T-cell (primary cell): ENCODE measurements at regions of chr19 and their contacts with region 1.

Region 1: GRCh38 chr19:11987405-11988281 is 22.8 kb downstream of the ZNF763 start:
- DNase-seq: peak; percentile 78 to 95 (median 90)
- ATAC-seq: peak; percentile 89 to 94 (median 94)
- H3K4me3 ChIP-seq: peak overlapping the region; percentile 91 to 96
- H3K4me3 Mint-ChIP-seq: peak overlapping the region; percentile 93 to 99 (median 97)
- H3K27ac ChIP-seq: peak overlapping the region; percentile 84
- H3K27ac Mint-ChIP-seq: peak overlapping the region; percentile 94 to 97
- H3K4me1 ChIP-seq: peaks cover 6 to 21% of the 10 kb centered on the region in 2 experiments
- H3K4me1 Mint-ChIP-seq: peaks cover 27 to 38% (median 34%) of the 10 kb centered on the region in 3 donors
- H3K27me3 ChIP-seq: no peaks in the 10 kb centered on the region
- H3K27me3 Mint-ChIP-seq: no peaks in the 10 kb centered on the region

Region 2: DNA sequence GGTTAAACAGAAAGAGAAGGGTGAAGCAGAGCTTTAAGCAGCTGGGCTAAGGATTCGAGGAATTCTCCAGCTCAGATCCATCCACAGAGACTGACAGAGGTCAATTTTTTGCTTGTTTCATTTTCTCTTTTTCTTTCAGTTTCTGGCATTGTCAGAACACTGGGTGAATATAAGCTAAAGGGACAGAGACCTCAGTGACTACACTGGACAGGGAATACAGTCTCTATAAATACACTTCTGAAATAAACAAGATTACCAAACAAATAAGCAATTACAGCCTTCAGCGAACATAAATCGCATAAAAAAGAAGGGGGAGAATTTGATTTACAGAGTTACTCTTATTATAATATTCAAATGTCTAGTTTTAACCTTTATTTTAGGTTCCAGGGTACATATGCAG is 224.5 kb before region 1 on chr19:
- CTCF ChIA-PET with region 1: no interaction called
- POLR2A ChIA-PET with region 1: no interaction called
- DNase-seq: no peak
- ATAC-seq: no peak
- H3K4me3 ChIP-seq: no peak overlapping the region
- H3K4me3 Mint-ChIP-seq: no peak overlapping the region
- H3K27ac ChIP-seq: no peak overlapping the region
- H3K27ac Mint-ChIP-seq: no peak overlapping the region
- H3K4me1 ChIP-seq: peaks cover 2 to 15% of the 10 kb centered on the region in 2 experiments
- H3K4me1 Mint-ChIP-seq: peaks cover 11 to 15% (median 12%) of the 10 kb centered on the region in 3 donors
- H3K27me3 ChIP-seq: no peaks in the 10 kb centered on the region
- H3K27me3 Mint-ChIP-seq: peaks cover 6 to 16% of the 10 kb centered on the region in 2 donors

Region 3: GRCh38 chr19:11856596-11857250 is 130.9 kb before region 1 on chr19:
- CTCF ChIA-PET with region 1: no interaction called
- POLR2A ChIA-PET with region 1: no interaction called
- DNase-seq: no peak
- ATAC-seq: no peak
- H3K4me3 ChIP-seq: no peak overlapping the region
- H3K4me3 Mint-ChIP-seq: no peak overlapping the region
- H3K27ac ChIP-seq: no peak overlapping the region
- H3K27ac Mint-ChIP-seq: no peak overlapping the region
- H3K4me1 ChIP-seq: no peaks in the 10 kb centered on the region
- H3K4me1 Mint-ChIP-seq: peaks cover 0 to 12% (median 5%) of the 10 kb centered on the region in 3 donors
- H3K27me3 ChIP-seq: no peaks in the 10 kb centered on the region
- H3K27me3 Mint-ChIP-seq: no peaks in the 10 kb centered on the region

Region 4: GRCh38 chr19:11942843-11943108 is 44.9 kb before region 1 on chr19:
- CTCF ChIA-PET with region 1: no interaction called
- POLR2A ChIA-PET with region 1: no interaction called
- DNase-seq: peak in 1 of 35 experiments; percentile 10
- ATAC-seq: no peak
- H3K4me3 ChIP-seq: no peak overlapping the region
- H3K4me3 Mint-ChIP-seq: no peak overlapping the region
- H3K27ac ChIP-seq: no peak overlapping the region
- H3K27ac Mint-ChIP-seq: no peak overlapping the region
- H3K4me1 ChIP-seq: no peaks in the 10 kb centered on the region
- H3K4me1 Mint-ChIP-seq: peaks cover 0 to 1% (median 0%) of the 10 kb centered on the region in 3 donors
- H3K27me3 ChIP-seq: no peaks in the 10 kb centered on the region
- H3K27me3 Mint-ChIP-seq: no peaks in the 10 kb centered on the region

Region 5: DNA sequence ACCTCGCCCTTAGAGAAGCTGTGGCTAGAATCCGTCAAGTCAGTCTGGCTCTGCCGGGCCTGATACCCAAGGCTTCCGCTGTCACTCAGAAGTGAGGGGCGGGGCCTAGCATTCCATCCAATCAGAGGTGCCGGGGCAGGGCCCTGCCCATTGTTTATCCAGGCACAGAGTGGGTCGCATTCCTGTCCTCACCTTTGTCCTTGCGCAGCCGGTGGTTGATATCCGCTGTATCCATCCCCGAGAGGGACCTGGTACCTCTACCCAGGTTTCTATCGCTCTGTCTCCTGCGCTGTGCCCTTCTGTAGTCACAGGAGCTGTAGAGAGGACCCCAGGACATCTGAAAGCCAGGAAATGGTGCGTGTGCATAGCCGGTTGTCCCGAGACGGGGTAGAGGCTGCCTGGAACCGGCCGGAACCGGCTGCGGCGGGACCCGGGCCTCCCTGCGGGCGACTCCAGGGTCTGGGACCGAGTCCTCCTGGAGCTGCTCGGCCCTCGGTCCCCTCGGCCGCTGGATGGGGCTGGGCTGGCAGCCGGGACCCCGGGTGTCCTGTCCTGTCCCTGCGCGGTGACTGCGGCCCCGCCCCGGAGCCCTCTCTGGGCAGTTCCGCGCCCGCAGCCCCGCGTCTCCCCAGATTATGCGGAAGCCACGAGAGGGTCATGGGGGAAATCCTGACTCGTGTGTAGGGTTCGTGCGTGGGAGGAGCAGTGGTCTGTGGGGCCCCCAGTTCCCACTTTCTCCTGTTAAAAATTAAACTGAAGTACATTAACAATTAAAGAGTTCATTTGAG is 22.6 kb before region 1 on chr19 and contains the start of gene ZNF763:
- CTCF ChIA-PET with region 1: interaction called, 4 to 48 read pairs
- POLR2A ChIA-PET with region 1: interaction called in 1 of 2 experiments, 4 read pairs
- DNase-seq: peak; percentile 75 to 93 (median 85)
- ATAC-seq: peak; percentile 92 to 95 (median 94)
- H3K4me3 ChIP-seq: peak within 1 kb of the TSS; percentile 76 to 98
- H3K4me3 Mint-ChIP-seq: peak within 1 kb of the TSS; percentile 90 to 95 (median 93)
- H3K27ac ChIP-seq: peak within 1 kb of the TSS; percentile 90
- H3K27ac Mint-ChIP-seq: peak within 1 kb of the TSS; percentile 91 to 97
- H3K4me1 ChIP-seq: peaks cover 5 to 20% of the 10 kb centered on the region in 2 experiments
- H3K4me1 Mint-ChIP-seq: peaks cover 27 to 30% (median 28%) of the 10 kb centered on the region in 3 donors
- H3K27me3 ChIP-seq: no peaks in the 10 kb centered on the region
- H3K27me3 Mint-ChIP-seq: no peaks in the 10 kb centered on the region
- total RNA-seq, gene ZNF763: 0.98 to 10.5 (median 8.0) TPM